ENCODE measurements at regions of chr17 and their contacts with region 1.

Region 1: GRCh38 chr17:64506576-64507477 is at the start of gene CEP95:
- DNase-seq: peak in 1 of 2 experiments; percentile 95
- H3K4me3 ChIP-seq: peak within 1 kb of the TSS; percentile 95 to 99 (median 98)
- H3K27ac ChIP-seq: peak within 1 kb of the TSS; percentile 99
- H3K4me1 ChIP-seq: peaks cover 0 to 11% (median 2%) of the 10 kb centered on the region in 4 experiments; a peak in 5 of 7 replicates
- H3K27me3 ChIP-seq: no peaks in the 10 kb centered on the region
- CTCF ChIP-seq: no peak; a peak in 1 of 4 replicates
- EP300 ChIP-seq: peak; percentile 34 to 85
- POLR2A ChIP-seq: no peak; a peak in 2 of 3 replicates
- RAD21 ChIP-seq: peak in 1 of 2 experiments; percentile 2; a peak in 1 of 4 replicates
- total RNA-seq, gene CEP95: 50.8 and 51.5 TPM in 2 replicates

Region 2: GRCh38 chr17:64534175-64534574 is 27.3 kb after region 1 on chr17:
- CTCF ChIA-PET with region 1: interaction called, 5 read pairs
- POLR2A ChIA-PET with region 1: interaction called, 75 read pairs
- DNase-seq: no peak
- H3K4me3 ChIP-seq: no peak overlapping the region
- H3K27ac ChIP-seq: no peak overlapping the region
- H3K4me1 ChIP-seq: no peaks in the 10 kb centered on the region
- H3K27me3 ChIP-seq: no peaks in the 10 kb centered on the region
- CTCF ChIP-seq: peak in 2 of 3 experiments; percentile 10 to 12; a peak in 2 of 4 replicates
- EP300 ChIP-seq: no peak
- POLR2A ChIP-seq: no peak
- RAD21 ChIP-seq: 0 out of 4 replicates have a peak, but pooled peaks of 1 of the 2 experiments have one; percentile 1

Region 3: DNA sequence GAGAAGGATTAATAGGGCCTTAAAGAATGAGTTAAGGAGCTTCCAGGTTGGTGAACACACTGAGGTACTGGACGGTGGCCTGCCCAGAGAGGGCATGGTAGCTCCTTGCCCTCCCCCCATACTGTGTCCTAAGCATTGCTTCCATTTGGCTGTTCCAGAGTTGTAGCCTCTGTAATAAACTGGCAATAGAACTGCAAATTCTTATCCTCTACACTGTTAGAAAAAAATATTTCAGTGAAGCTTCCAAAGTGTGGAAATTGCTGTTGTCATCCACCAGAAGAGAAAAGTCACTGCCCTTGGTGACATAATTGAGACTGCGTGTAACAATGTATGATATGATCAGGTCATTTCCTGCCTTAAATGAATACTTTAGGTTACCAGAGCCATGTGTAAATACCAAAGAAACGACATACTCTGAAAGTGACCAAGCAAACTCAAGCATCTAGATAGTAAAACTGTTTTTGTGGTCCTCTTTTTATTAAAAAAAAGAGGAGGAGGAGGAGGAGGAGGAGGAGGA is 65.9 kb after region 1 on chr17:
- CTCF ChIA-PET with region 1: no interaction called
- POLR2A ChIA-PET with region 1: interaction called, 14 read pairs
- DNase-seq: no peak
- H3K4me3 ChIP-seq: no peak overlapping the region
- H3K27ac ChIP-seq: no peak overlapping the region
- H3K4me1 ChIP-seq: no peaks in the 10 kb centered on the region
- H3K27me3 ChIP-seq: no peaks in the 10 kb centered on the region
- CTCF ChIP-seq: no peak
- EP300 ChIP-seq: no peak
- POLR2A ChIP-seq: no peak
- RAD21 ChIP-seq: no peak

Region 4: DNA sequence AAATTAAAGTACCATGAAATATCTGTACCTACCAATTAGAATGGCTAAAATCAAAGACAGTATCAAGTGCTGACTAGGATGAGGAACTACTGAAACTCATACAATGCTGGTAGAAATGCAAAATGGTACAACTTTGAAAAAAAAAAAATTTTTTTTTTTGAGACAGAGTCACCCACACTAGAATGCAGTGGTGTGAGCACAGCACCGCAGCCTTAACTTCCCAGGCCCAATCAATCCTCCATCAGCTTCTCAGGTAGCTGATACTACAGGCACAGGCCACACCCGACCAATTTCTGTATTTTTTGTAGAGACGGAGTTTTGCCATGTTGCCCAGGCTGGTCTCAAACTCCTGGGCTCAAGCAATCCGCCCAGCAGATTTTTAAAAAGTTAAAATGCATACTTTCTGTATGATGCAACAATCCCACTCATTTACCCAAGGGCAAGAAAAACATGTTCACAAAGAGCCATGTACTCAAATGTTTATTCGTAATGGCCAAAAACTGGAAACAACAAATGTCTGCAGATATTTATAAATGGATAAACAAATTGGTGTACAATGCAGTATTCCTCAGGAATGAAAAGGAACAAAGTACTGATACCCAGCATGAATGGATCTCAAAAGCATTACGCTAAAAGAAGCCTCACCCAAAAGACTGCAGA is 146.6 kb after region 1 on chr17:
- CTCF ChIA-PET with region 1: no interaction called
- POLR2A ChIA-PET with region 1: interaction called, 13 read pairs
- DNase-seq: no peak
- H3K4me3 ChIP-seq: no peak overlapping the region
- H3K27ac ChIP-seq: no peak overlapping the region
- H3K4me1 ChIP-seq: no peaks in the 10 kb centered on the region
- H3K27me3 ChIP-seq: no peaks in the 10 kb centered on the region
- CTCF ChIP-seq: no peak
- EP300 ChIP-seq: no peak
- POLR2A ChIP-seq: no peak
- RAD21 ChIP-seq: no peak

Region 5: GRCh38 chr17:64773836-64774761 is 267.3 kb after region 1 on chr17:
- CTCF ChIA-PET with region 1: no interaction called
- POLR2A ChIA-PET with region 1: interaction called, 10 read pairs
- DNase-seq: peak; percentile 72 to 93
- H3K4me3 ChIP-seq: peak overlapping the region; percentile 46 to 69 (median 54)
- H3K27ac ChIP-seq: no peak overlapping the region; the same call in 1 of the 2 replicates
- H3K4me1 ChIP-seq: peaks cover 2 to 20% (median 6%) of the 10 kb centered on the region in 4 experiments
- H3K27me3 ChIP-seq: peaks cover 18 to 41% (median 37%) of the 10 kb centered on the region in 4 experiments
- CTCF ChIP-seq: peak; percentile 54 to 85 (median 79)
- EP300 ChIP-seq: no peak
- POLR2A ChIP-seq: peak in 1 of 2 experiments; percentile 75; a peak in 2 of 3 replicates
- RAD21 ChIP-seq: peak; percentile 54

Measured in H1 (cell line).